ENCODE measurements at regions of chr13 and their contacts with region 1.

Region 1: DNA sequence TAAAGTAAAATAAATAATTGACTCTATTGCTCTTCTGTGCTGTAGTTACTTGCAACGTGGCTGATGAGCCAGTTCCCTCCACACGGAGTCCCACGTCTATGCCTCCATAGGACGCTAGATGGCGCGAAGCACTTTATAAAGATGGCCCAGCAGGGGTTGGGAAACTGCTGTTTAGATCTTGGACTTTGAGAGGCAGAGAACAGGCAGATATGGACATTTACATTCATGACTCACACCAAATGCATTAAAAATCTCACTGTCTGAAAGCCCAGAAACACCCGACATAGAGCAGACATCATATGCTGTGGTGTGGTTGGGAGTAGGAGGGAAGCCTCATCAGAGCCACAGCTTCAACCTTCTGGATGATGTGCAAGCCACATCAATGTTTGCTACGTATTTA is 643.1 kb upstream of the ARGLU1 start:
- DNase-seq: peak; percentile 39 to 76
- H3K4me3 ChIP-seq: no peak overlapping the region
- H3K4me1 ChIP-seq: no peaks in the 10 kb centered on the region
- H3K27me3 ChIP-seq: 0 out of 2 replicates have a peak, but pooled peaks cover 3% of the 10 kb centered on the region

Region 2: DNA sequence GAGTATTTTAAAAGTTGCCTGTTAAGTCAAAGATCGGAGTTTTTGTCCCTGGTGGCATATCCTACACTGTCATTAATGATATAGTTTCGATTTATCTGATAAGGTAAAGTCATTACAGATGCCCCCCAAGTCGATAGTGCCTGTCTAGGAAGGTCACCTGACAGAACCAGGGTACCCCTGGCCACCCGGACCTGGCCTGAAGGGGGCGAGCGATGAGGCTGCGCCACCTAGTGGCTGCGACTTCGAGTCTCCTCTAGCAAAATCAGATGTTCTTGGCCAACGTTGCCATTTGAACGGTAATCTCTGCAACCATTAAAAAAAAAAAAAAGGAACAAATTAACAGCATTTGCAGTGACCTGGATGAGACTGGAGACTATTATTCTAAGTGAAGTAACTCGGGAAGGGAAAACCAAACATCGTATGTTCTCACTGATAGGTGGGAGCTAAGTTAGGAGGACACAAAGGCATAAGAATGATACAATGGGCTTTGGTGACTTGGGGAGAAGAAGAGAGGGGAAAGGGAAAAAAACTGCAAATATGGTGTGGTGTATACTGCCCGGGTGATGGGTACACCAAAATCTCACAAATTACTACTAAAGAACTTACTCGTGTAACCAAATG is 439.1 kb after region 1 on chr13:
- in situ Hi-C with region 1: loop called (anchors 25 kb)
- DNase-seq: peak; percentile 19 to 73
- H3K4me3 ChIP-seq: no peak overlapping the region
- H3K4me1 ChIP-seq: no peaks in the 10 kb centered on the region
- H3K27me3 ChIP-seq: no peaks in the 10 kb centered on the region

Region 3: GRCh38 chr13:108155185-108156106 is 944.4 kb after region 1 on chr13:
- in situ Hi-C with region 1: loop called (anchors 25 kb)
- DNase-seq: peak; percentile 34 to 74
- H3K4me3 ChIP-seq: no peak overlapping the region
- H3K4me1 ChIP-seq: no peaks in the 10 kb centered on the region
- H3K27me3 ChIP-seq: no peaks in the 10 kb centered on the region

Measured in HAP-1 (cell line).